H1 (cell line): ENCODE measurements at regions of chr3 and their contacts with region 1.

Region 1: GRCh38 chr3:10192953-10193691 is 28.4 kb downstream of the IRAK2 start:
- DNase-seq: no peak
- H3K4me3 ChIP-seq: no peak overlapping the region
- H3K27ac ChIP-seq: no peak overlapping the region
- H3K4me1 ChIP-seq: peaks cover 0 to 3% (median 0%) of the 10 kb centered on the region in 4 experiments; a peak in 1 of 7 replicates
- H3K27me3 ChIP-seq: no peaks in the 10 kb centered on the region
- CTCF ChIP-seq: peak; percentile 40 to 70 (median 65)
- EP300 ChIP-seq: no peak
- POLR2A ChIP-seq: no peak
- RAD21 ChIP-seq: peak in 1 of 2 experiments; percentile 16; a peak in 2 of 4 replicates

Region 2: DNA sequence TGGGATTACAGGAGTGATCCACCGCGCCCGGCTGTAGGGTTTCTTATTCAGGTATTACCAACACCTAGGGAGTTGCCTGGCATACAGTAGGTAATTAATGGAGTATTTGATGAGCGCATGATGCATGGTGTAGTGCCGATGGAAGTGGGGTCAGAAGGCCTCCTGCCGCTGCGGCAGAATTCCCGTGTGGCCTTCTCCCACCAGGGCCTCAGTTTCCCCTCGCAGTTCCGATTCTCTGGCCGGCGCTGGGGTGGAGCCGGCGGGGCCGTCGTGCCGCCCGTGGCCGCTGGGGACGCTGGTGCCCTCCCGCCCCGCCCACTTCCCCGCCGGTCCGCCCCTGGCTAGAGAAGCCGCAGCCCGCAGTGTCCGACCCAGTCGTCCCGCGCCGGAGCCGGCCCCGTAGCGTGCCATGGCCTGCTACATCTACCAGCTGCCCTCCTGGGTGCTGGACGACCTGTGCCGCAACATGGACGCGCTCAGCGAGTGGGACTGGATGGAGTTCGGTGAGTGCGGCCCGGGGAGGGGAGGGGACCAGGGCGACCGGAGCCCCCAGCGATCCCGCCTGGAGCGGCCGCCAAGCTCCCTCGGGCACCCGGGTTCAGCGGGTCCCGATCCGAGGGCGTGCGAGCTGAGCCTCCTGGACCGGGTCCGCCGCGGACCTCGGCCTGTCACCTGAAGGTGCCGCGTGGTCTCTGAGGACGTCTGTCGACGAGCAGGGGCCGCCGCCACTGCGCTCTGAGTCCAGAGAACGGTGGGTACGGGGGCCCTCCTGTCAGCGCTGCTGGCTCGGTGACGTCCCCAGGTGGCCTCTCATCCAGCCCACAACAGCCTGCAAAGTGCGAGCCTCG is 28.4 kb before region 1 on chr3 and contains the start of gene IRAK2:
- CTCF ChIA-PET with region 1: interaction called, 38 read pairs
- POLR2A ChIA-PET with region 1: no interaction called
- DNase-seq: peak in 1 of 2 experiments; percentile 84
- H3K4me3 ChIP-seq: peak within 1 kb of the TSS; percentile 44 to 86 (median 75)
- H3K27ac ChIP-seq: no peak within 1 kb of the TSS
- H3K4me1 ChIP-seq: peaks cover 0 to 2% (median 0%) of the 10 kb centered on the region in 4 experiments; a peak in 2 of 7 replicates
- H3K27me3 ChIP-seq: no peaks in the 10 kb centered on the region; a peak in 1 of 7 replicates
- CTCF ChIP-seq: peak; percentile 56 to 93 (median 75)
- EP300 ChIP-seq: no peak
- POLR2A ChIP-seq: no peak
- RAD21 ChIP-seq: peak; percentile 40 to 47; a peak in 3 of 4 replicates
- total RNA-seq, gene IRAK2: 1.3 and 1.5 TPM in 2 replicates

Region 3: GRCh38 chr3:10173095-10173925 is 19.8 kb before region 1 on chr3:
- CTCF ChIA-PET with region 1: interaction called, 38 read pairs
- POLR2A ChIA-PET with region 1: interaction called, 3 read pairs
- DNase-seq: no peak
- H3K4me3 ChIP-seq: no peak overlapping the region
- H3K27ac ChIP-seq: no peak overlapping the region; the same call in 1 of the 2 replicates
- H3K4me1 ChIP-seq: peaks cover 0 to 2% (median 0%) of the 10 kb centered on the region in 4 experiments; a peak in 2 of 7 replicates
- H3K27me3 ChIP-seq: no peaks in the 10 kb centered on the region
- CTCF ChIP-seq: no peak
- EP300 ChIP-seq: no peak
- POLR2A ChIP-seq: no peak
- RAD21 ChIP-seq: no peak

Region 4: DNA sequence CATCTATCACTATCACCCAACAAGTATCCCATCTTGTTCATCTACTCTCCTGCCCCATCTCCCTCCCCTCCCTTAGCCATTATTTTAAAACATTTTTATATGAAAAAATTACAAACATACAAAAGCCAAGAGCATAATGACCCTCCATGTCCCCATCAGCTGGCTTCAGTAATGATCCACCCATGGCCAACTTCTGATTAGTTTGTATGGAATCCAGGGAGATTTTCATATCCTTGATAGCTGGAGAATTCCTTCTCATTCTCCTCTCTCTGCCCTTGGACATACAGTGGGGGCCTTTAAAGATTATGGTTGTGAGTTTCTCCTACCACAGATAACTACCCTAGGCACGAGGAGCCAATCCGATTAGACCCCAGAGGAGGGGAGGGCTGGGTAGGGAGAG is 11.8 kb after region 1 on chr3:
- CTCF ChIA-PET with region 1: interaction called, 10 read pairs
- POLR2A ChIA-PET with region 1: no interaction called
- DNase-seq: no peak
- H3K4me3 ChIP-seq: no peak overlapping the region
- H3K27ac ChIP-seq: no peak overlapping the region
- H3K4me1 ChIP-seq: 0 out of 7 replicates have a peak, but pooled peaks cover 0 to 3% (median 0%) of the 10 kb centered on the region in 4 experiments
- H3K27me3 ChIP-seq: no peaks in the 10 kb centered on the region
- CTCF ChIP-seq: no peak
- EP300 ChIP-seq: no peak
- POLR2A ChIP-seq: no peak
- RAD21 ChIP-seq: no peak

Region 5: GRCh38 chr3:10223676-10224639 is 30.8 kb after region 1 on chr3:
- CTCF ChIA-PET with region 1: interaction called, 15 read pairs
- POLR2A ChIA-PET with region 1: interaction called, 5 read pairs
- DNase-seq: no peak
- H3K4me3 ChIP-seq: no peak overlapping the region
- H3K27ac ChIP-seq: no peak overlapping the region
- H3K4me1 ChIP-seq: peaks cover 2 to 15% (median 8%) of the 10 kb centered on the region in 4 experiments
- H3K27me3 ChIP-seq: no peaks in the 10 kb centered on the region
- CTCF ChIP-seq: no peak
- EP300 ChIP-seq: no peak
- POLR2A ChIP-seq: no peak
- RAD21 ChIP-seq: no peak

Region 6: DNA sequence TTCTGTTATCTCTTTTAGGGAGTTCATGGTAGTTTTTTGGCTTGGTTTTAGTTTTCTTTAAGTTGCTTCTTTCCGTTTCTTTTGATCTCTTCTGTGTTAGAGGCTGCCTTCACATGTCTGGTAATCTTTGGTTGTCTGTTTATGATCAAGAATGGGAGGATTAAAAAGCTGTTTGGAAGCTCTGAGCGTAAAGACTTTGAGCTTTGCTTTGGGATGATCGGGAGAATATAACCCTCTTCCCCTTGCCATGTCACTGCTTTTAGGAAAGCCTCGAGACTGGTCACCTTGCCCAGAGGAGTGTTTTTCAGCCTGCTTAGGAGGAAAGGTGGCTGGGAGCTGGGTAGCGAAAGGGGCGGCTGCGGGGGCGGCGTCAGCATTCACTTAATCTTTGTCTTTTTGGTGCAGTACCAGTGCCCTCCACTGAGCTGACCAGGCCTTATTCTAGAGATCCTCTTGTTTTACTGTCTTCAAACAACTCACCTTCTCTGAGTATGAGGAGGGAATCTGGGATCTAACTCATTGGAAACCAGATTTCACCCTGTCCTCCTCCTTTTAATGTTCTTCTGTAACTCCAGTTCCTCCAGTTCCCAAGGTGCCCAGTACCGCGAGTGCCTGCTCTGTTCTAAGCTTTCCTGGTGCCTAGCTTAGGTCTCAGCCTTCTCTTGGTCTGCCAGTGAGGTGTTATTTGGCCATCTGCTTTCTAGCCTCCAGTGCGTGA is 70.7 kb after region 1 on chr3:
- CTCF ChIA-PET with region 1: interaction called, 22 read pairs
- POLR2A ChIA-PET with region 1: no interaction called
- DNase-seq: peak in 1 of 2 experiments; percentile 81
- H3K4me3 ChIP-seq: no peak overlapping the region
- H3K27ac ChIP-seq: no peak overlapping the region
- H3K4me1 ChIP-seq: no peaks in the 10 kb centered on the region; a peak in 2 of 7 replicates
- H3K27me3 ChIP-seq: no peaks in the 10 kb centered on the region
- CTCF ChIP-seq: peak; percentile 20 to 61 (median 23); a peak in 3 of 4 replicates
- EP300 ChIP-seq: no peak
- POLR2A ChIP-seq: no peak
- RAD21 ChIP-seq: peak; percentile 38 to 40; a peak in 3 of 4 replicates